Pancreas (tissue), 10 donors: ENCODE measurements at regions of chr20 and their contacts with region 1.

Region 1: GRCh38 chr20:63381807-63382322 is 20.7 kb upstream of the CHRNA4 start:
- DNase-seq: peak in 3 of 6 donors; percentile 23 to 77 (median 74)
- ATAC-seq: peak in 3 of 4 donors; percentile 56 to 68 (median 67)
- H3K4me3 ChIP-seq: no peak overlapping the region
- H3K27ac ChIP-seq: no peak overlapping the region
- H3K4me1 ChIP-seq: no peaks in the 10 kb centered on the region
- H3K27me3 ChIP-seq: peaks cover 0 to 15% (median 2%) of the 10 kb centered on the region in 4 donors
- CTCF ChIP-seq: peak; percentile 77 to 91 (median 90)

Region 2: DNA sequence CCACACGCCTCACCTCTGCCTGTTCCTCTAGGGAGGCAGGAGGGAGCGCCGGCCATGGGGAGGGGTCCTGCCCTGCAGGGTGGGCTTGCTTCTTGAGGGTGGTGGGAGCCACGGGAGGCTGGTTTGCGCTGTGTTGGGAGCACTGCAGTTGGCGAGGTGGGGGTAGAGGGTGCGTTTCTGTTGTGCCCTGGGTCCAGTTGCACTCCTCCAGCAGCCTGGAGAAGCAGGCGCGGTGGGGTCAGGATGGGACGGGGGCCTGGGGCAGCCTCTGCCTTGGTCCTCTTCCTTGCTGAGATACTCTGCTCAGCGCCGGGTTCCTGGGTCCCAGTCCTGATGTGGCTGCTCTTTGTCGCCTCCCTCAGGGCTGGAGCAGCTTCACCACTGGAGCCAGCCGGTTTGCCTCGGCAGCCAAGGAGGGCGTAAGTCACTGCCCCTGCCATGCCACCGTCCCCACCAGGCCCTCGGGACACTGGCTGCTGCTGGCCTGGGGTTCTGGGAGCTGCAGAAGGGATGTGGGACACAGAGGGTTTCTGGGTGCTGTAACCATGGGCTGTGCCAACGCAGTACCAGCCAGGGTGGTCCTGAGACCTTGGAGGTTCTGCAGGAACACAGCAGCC is 100.8 kb before region 1 on chr20:
- intact Hi-C with region 1: no loop called
- DNase-seq: peak in 1 of 6 donors; percentile 60
- ATAC-seq: no peak
- H3K4me3 ChIP-seq: no peak overlapping the region
- H3K27ac ChIP-seq: no peak overlapping the region
- H3K4me1 ChIP-seq: no peaks in the 10 kb centered on the region
- H3K27me3 ChIP-seq: no peaks in the 10 kb centered on the region
- CTCF ChIP-seq: no peak

Region 3: GRCh38 chr20:63297796-63298572 is 83.9 kb before region 1 on chr20:
- intact Hi-C with region 1: no loop called
- DNase-seq: peak in 1 of 6 donors; percentile 23
- ATAC-seq: no peak
- H3K4me3 ChIP-seq: no peak overlapping the region
- H3K27ac ChIP-seq: no peak overlapping the region
- H3K4me1 ChIP-seq: no peaks in the 10 kb centered on the region
- H3K27me3 ChIP-seq: peaks cover 0 to 12% (median 0%) of the 10 kb centered on the region in 4 donors
- CTCF ChIP-seq: no peak

Region 4: GRCh38 chr20:63309261-63310071 is 72.4 kb before region 1 on chr20:
- intact Hi-C with region 1: loop called in 2 of 3 experiments (anchors 2 to 5 kb)
- DNase-seq: peak in 4 of 6 donors; percentile 42 to 82 (median 70)
- ATAC-seq: peak; percentile 41 to 83 (median 72)
- H3K4me3 ChIP-seq: no peak overlapping the region
- H3K27ac ChIP-seq: no peak overlapping the region
- H3K4me1 ChIP-seq: no peaks in the 10 kb centered on the region
- H3K27me3 ChIP-seq: peaks cover 0 to 17% (median 2%) of the 10 kb centered on the region in 4 donors
- CTCF ChIP-seq: peak; percentile 69 to 87 (median 83)

Region 5: DNA sequence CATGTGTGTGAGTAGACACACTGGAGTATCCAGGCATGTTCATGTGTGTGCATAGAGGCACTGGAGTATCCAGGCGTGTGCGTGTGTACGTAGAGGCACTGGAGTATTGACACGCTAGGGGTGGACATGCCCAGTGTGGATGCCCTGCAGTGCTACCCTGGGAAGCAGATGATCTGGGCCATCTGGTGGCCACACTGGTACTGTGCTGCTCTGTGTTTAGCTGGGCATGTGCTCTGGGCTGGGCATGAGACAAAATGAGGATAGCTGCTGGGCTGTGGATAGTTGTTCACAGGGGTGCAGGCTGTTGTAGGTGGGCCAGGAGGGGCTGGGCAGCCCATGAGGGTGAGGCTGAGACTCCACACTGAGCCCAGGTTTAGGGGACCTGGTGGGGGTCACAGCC is 749.5 kb after region 1 on chr20:
- intact Hi-C with region 1: no loop called
- DNase-seq: peak in 2 of 6 donors; percentile 27 to 34
- ATAC-seq: peak in 3 of 4 donors; percentile 40 to 53 (median 53)
- H3K4me3 ChIP-seq: no peak overlapping the region
- H3K27ac ChIP-seq: no peak overlapping the region
- H3K4me1 ChIP-seq: no peaks in the 10 kb centered on the region
- H3K27me3 ChIP-seq: no peaks in the 10 kb centered on the region
- CTCF ChIP-seq: no peak